ENCODE measurements at regions of chr20 and their contacts with region 1.

Region 1: DNA sequence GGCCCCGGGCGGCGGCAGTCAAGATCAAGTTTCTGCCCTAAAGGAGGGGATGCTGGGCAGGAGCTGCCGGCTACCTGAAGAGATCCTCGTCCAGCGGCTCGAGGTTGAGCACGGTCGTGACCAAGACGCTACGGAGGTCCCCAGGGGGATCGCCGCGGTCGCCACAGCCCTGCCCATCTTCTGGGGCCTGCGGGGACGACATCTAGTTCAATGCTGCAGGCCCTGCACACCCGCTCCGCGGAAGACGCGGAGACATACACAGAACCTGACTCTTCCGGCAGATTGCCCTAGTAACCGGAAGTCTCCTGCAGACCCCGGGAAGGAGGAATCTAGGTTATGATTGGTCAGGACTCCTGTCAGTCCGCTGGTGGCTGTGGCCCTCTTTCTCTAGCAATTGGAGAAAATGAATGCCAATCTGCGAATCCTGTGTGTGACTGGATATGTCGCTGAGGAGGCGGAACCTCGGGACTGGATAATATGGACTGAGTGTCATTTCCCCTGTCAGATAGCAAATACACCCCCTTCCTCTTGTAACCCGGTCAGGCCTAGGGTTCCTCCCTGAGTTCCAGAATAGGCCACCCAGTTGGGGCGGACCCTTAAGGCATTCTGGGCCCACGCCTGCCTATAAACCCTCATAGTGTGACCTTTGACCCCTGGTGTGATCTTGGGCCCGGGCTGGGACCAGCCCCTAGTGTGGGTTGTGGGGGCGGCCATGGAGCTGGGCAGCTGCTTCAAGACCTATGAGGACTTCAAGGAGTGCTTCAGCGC is at the starts of genes ACOT8 and ZSWIM3:
- DNase-seq: peak; percentile 99
- ATAC-seq: peak; percentile 98
- H3K4me3 Mint-ChIP-seq: peak within 1 kb of the TSS; percentile 98
- H3K27ac Mint-ChIP-seq: peak within 1 kb of the TSS; percentile 100
- H3K4me1 Mint-ChIP-seq: peaks cover 55% of the 10 kb centered on the region
- H3K27me3 Mint-ChIP-seq: no peaks in the 10 kb centered on the region
- total RNA-seq, gene ACOT8: 29.3 to 32.1 TPM
- total RNA-seq, gene ZSWIM3: 5.1 to 5.8 TPM

Region 2: DNA sequence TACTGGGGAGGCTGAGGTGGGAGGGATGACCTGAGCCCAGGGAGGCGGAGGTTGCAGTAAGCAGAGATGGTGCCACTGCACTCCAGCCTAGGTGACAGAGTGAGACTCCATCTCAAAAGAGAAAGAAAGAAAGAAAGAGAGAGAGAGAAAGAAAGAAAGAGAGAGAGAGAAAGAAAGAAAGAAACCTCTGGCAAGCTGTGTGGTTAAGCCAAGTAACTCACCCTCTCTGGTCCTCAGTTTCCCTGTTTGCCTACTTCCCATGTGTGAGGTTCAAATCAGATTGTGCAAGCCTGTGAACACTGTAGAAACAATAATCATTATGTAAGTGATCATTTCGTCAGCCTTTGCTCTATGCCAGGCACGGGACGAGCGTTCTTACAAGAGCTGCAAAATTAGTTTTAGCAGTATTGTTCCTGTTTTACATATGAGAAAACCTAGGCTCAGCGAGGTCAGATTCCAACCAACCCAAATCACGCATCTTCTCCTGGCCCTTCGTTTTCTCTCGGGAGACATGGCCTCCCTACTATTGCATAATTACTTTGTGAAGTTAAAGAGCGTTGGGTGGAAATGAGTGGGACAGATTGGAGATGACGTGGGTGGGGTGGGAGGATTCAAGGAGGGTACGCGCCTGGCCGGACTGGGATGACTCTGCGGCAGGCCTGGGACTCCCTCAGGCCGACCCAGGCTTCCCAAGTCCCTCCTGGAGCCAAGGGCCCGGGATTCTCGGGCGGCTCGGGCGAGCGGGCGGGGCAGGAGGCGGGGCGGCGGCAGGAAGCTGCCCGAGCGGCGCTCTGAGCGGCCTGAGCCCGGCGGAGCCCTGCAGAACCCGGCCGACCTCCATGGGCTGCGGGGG is 24.0 kb before region 1 on chr20 and contains the start of gene SNX21:
- CTCF ChIA-PET with region 1: interaction called, 4 read pairs
- POLR2A ChIA-PET with region 1: interaction called, 12 read pairs
- DNase-seq: peak; percentile 29
- ATAC-seq: peak; percentile 88
- H3K4me3 Mint-ChIP-seq: peak within 1 kb of the TSS; percentile 70
- H3K27ac Mint-ChIP-seq: peak within 1 kb of the TSS; percentile 18
- H3K4me1 Mint-ChIP-seq: peaks cover 13% of the 10 kb centered on the region
- H3K27me3 Mint-ChIP-seq: peaks cover 3% of the 10 kb centered on the region
- total RNA-seq, gene SNX21: 1.6 to 1.7 TPM

Region 3: GRCh38 chr20:45842169-45842812 is 15.0 kb before region 1 on chr20:
- CTCF ChIA-PET with region 1: interaction called, 3 read pairs
- POLR2A ChIA-PET with region 1: interaction called, 11 read pairs
- DNase-seq: no peak
- ATAC-seq: no peak
- H3K4me3 Mint-ChIP-seq: no peak overlapping the region
- H3K27ac Mint-ChIP-seq: no peak overlapping the region
- H3K4me1 Mint-ChIP-seq: no peaks in the 10 kb centered on the region
- H3K27me3 Mint-ChIP-seq: no peaks in the 10 kb centered on the region

Region 4: GRCh38 chr20:45880988-45881788 is 23.9 kb after region 1 on chr20 and contains the start of gene ZSWIM1:
- CTCF ChIA-PET with region 1: no interaction called
- POLR2A ChIA-PET with region 1: interaction called, 11 read pairs
- DNase-seq: peak; percentile 99
- ATAC-seq: peak; percentile 99
- H3K4me3 Mint-ChIP-seq: peak within 1 kb of the TSS; percentile 86
- H3K27ac Mint-ChIP-seq: peak within 1 kb of the TSS; percentile 84
- H3K4me1 Mint-ChIP-seq: peaks cover 39% of the 10 kb centered on the region
- H3K27me3 Mint-ChIP-seq: no peaks in the 10 kb centered on the region
- total RNA-seq, gene ZSWIM1: 7.0 TPM

Measured in activated CD8-positive, alpha-beta T cell treated with anti-CD3 and anti-CD28 coated beads, Interleukin-2, amount 10 ng/mL, durations not matched to agents 7 days and 5 days (primary cell).